GM12878 (cell line): ENCODE measurements at regions of chr2 and their contacts with region 1.

Region 1: GRCh38 chr2:30208452-30208851 is 22.9 kb upstream of the LBH start:
- DNase-seq: no peak
- ATAC-seq: peak; percentile 82
- H3K4me3 ChIP-seq: no peak overlapping the region
- H3K27ac ChIP-seq: no peak overlapping the region
- H3K4me1 ChIP-seq: peaks cover 2% of the 10 kb centered on the region
- H3K27me3 ChIP-seq: no peaks in the 10 kb centered on the region; a peak in 1 of 4 replicates
- CTCF ChIP-seq: peak; percentile 84 to 90 (median 88)
- EP300 ChIP-seq: no peak
- POLR2A ChIP-seq: no peak
- RAD21 ChIP-seq: peak; percentile 94

Region 2: DNA sequence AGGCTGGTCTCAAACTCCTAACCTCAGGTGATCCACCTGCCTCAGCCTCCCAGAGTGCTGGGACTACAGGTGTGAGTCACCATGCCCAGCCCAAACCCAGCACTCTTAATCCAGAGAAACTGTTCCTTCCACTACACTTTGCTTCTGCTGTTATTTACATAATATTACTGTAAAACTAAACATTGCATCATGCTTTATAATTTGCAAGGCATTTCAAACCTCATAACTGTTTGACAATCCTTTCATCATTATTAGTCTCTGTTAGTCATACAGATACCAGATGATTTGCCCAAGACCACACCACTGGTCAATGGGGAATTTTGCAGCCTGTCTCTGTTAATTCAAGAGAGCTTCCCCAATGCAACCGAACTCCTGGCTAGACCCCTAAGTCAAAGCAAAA is 625.4 kb before region 1 on chr2:
- CTCF ChIA-PET with region 1: no interaction called
- POLR2A ChIA-PET with region 1: no interaction called
- RAD21 ChIA-PET with region 1: no interaction called
- SMC1A ChIA-PET with region 1: no interaction called
- in situ Hi-C with region 1: no loop called
- intact Hi-C with region 1: no loop called
- DNase-seq: peak; percentile 47
- ATAC-seq: peak; percentile 93
- H3K4me3 ChIP-seq: no peak overlapping the region
- H3K27ac ChIP-seq: no peak overlapping the region
- H3K4me1 ChIP-seq: no peaks in the 10 kb centered on the region
- H3K27me3 ChIP-seq: no peaks in the 10 kb centered on the region; a peak in 2 of 4 replicates
- CTCF ChIP-seq: no peak
- EP300 ChIP-seq: peak in 1 of 2 experiments; percentile 49; a peak in 1 of 4 replicates
- POLR2A ChIP-seq: no peak
- RAD21 ChIP-seq: no peak

Region 3: GRCh38 chr2:30225131-30225762 is 16.8 kb after region 1 on chr2:
- CTCF ChIA-PET with region 1: interaction called, 207 read pairs
- POLR2A ChIA-PET with region 1: interaction called, 12 read pairs
- RAD21 ChIA-PET with region 1: interaction called, 322 read pairs
- SMC1A ChIA-PET with region 1: interaction called, 444 read pairs
- in situ Hi-C with region 1: no loop called
- intact Hi-C with region 1: no loop called
- DNase-seq: no peak
- ATAC-seq: peak; percentile 72
- H3K4me3 ChIP-seq: peak overlapping the region; percentile 56
- H3K27ac ChIP-seq: peak overlapping the region; percentile 95
- H3K4me1 ChIP-seq: peaks cover 45% of the 10 kb centered on the region
- H3K27me3 ChIP-seq: no peaks in the 10 kb centered on the region
- CTCF ChIP-seq: 0 out of 6 replicates have a peak, but pooled peaks of 1 of the 3 experiments have one; percentile 7
- EP300 ChIP-seq: no peak
- POLR2A ChIP-seq: peak; percentile 60
- RAD21 ChIP-seq: no peak

Region 4: GRCh38 chr2:30287857-30288513 is 79.5 kb after region 1 on chr2:
- CTCF ChIA-PET with region 1: interaction called, 28 read pairs
- POLR2A ChIA-PET with region 1: no interaction called
- RAD21 ChIA-PET with region 1: interaction called, 23 read pairs
- SMC1A ChIA-PET with region 1: interaction called, 23 read pairs
- in situ Hi-C with region 1: no loop called
- intact Hi-C with region 1: no loop called
- DNase-seq: peak; percentile 55
- ATAC-seq: peak; percentile 89
- H3K4me3 ChIP-seq: peak overlapping the region; percentile 40; the same call in 1 of the 2 replicates
- H3K27ac ChIP-seq: peak overlapping the region; percentile 85
- H3K4me1 ChIP-seq: peaks cover 26% of the 10 kb centered on the region
- H3K27me3 ChIP-seq: no peaks in the 10 kb centered on the region
- CTCF ChIP-seq: no peak
- EP300 ChIP-seq: peak; percentile 21 to 43; a peak in 1 of 4 replicates
- POLR2A ChIP-seq: no peak
- RAD21 ChIP-seq: no peak

Region 5: GRCh38 chr2:30447149-30448045 is 238.9 kb after region 1 on chr2 and contains the start of gene LCLAT1:
- CTCF ChIA-PET with region 1: interaction called, 13 read pairs
- POLR2A ChIA-PET with region 1: no interaction called
- RAD21 ChIA-PET with region 1: interaction called, 8 read pairs
- SMC1A ChIA-PET with region 1: interaction called, 14 read pairs
- in situ Hi-C with region 1: no loop called
- intact Hi-C with region 1: loop called (anchors 5 kb)
- DNase-seq: peak; percentile 44
- ATAC-seq: peak; percentile 95
- H3K4me3 ChIP-seq: peak within 1 kb of the TSS; percentile 93
- H3K27ac ChIP-seq: peak within 1 kb of the TSS; percentile 77
- H3K4me1 ChIP-seq: no peaks in the 10 kb centered on the region; the same call in 1 of the 2 replicates
- H3K27me3 ChIP-seq: no peaks in the 10 kb centered on the region
- CTCF ChIP-seq: no peak; a peak in 1 of 6 replicates
- EP300 ChIP-seq: no peak
- POLR2A ChIP-seq: peak; percentile 84
- RAD21 ChIP-seq: no peak
- polyA plus RNA-seq, gene LCLAT1: 8.1 to 33.0 TPM

Region 6: GRCh38 chr2:30503007-30503694 is 294.7 kb after region 1 on chr2:
- CTCF ChIA-PET with region 1: interaction called, 10 read pairs
- POLR2A ChIA-PET with region 1: no interaction called
- RAD21 ChIA-PET with region 1: interaction called, 3 read pairs
- SMC1A ChIA-PET with region 1: interaction called, 6 read pairs
- in situ Hi-C with region 1: no loop called
- intact Hi-C with region 1: no loop called
- DNase-seq: no peak
- ATAC-seq: peak; percentile 66
- H3K4me3 ChIP-seq: no peak overlapping the region
- H3K27ac ChIP-seq: no peak overlapping the region
- H3K4me1 ChIP-seq: peaks cover 5% of the 10 kb centered on the region
- H3K27me3 ChIP-seq: no peaks in the 10 kb centered on the region
- CTCF ChIP-seq: no peak
- EP300 ChIP-seq: no peak
- POLR2A ChIP-seq: no peak
- RAD21 ChIP-seq: no peak; the same call in 1 of the 2 replicates

Region 7: GRCh38 chr2:30691948-30692828 is 483.7 kb after region 1 on chr2:
- CTCF ChIA-PET with region 1: interaction called, 19 read pairs
- POLR2A ChIA-PET with region 1: no interaction called
- RAD21 ChIA-PET with region 1: interaction called, 31 read pairs
- SMC1A ChIA-PET with region 1: interaction called, 23 read pairs
- in situ Hi-C with region 1: no loop called
- intact Hi-C with region 1: loop called (anchors 5 kb)
- DNase-seq: no peak
- ATAC-seq: peak; percentile 85
- H3K4me3 ChIP-seq: no peak overlapping the region
- H3K27ac ChIP-seq: no peak overlapping the region
- H3K4me1 ChIP-seq: no peaks in the 10 kb centered on the region
- H3K27me3 ChIP-seq: no peaks in the 10 kb centered on the region; a peak in 1 of 4 replicates
- CTCF ChIP-seq: peak; percentile 13 to 36 (median 27); a peak in 4 of 6 replicates
- EP300 ChIP-seq: no peak
- POLR2A ChIP-seq: no peak
- RAD21 ChIP-seq: peak; percentile 70